ENCODE measurements at regions of chr2 and their contacts with region 1.

Region 1: GRCh38 chr2:234135720-234136221 is 85.3 kb downstream of the SPP2 start:
- DNase-seq: peak; percentile 70
- H3K4me3 Mint-ChIP-seq: no peak overlapping the region
- H3K27ac Mint-ChIP-seq: no peak overlapping the region
- H3K4me1 Mint-ChIP-seq: peaks cover 22% of the 10 kb centered on the region
- H3K27me3 Mint-ChIP-seq: no peaks in the 10 kb centered on the region

Region 2: DNA sequence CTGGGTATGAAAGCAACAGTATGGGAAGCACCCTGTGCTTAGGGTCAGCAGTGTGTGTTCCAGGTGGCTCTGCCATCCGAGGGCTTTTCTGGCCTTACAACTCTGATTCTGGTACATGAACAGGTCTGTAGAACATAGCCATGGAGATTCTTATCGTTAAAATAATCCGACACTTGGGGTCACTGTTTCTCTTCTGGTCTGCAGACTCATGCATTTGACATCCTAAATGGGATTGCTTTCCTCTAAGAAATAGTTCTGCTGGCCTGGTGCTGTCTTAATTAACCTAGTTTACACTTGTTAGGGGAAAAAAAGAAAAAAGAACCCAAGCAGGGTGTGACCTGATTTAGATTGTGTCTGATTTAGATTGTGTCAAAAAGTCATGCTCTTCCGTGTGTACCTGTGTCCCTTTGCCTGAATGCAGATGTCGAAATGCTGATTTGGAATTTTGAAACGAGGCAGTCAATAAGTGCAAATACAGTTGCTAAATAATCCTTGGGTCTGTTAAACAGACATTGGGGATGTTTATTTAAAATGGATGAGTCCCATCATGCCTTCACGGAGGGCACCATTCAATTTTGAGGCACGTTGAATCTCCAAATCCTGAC is 159.0 kb before region 1 on chr2:
- CTCF ChIA-PET with region 1: interaction called, 3 read pairs
- POLR2A ChIA-PET with region 1: no interaction called
- intact Hi-C with region 1: loop called (anchors 2 kb)
- DNase-seq: no peak
- H3K4me3 Mint-ChIP-seq: no peak overlapping the region
- H3K27ac Mint-ChIP-seq: no peak overlapping the region
- H3K4me1 Mint-ChIP-seq: peaks cover 37% of the 10 kb centered on the region
- H3K27me3 Mint-ChIP-seq: no peaks in the 10 kb centered on the region

Region 3: DNA sequence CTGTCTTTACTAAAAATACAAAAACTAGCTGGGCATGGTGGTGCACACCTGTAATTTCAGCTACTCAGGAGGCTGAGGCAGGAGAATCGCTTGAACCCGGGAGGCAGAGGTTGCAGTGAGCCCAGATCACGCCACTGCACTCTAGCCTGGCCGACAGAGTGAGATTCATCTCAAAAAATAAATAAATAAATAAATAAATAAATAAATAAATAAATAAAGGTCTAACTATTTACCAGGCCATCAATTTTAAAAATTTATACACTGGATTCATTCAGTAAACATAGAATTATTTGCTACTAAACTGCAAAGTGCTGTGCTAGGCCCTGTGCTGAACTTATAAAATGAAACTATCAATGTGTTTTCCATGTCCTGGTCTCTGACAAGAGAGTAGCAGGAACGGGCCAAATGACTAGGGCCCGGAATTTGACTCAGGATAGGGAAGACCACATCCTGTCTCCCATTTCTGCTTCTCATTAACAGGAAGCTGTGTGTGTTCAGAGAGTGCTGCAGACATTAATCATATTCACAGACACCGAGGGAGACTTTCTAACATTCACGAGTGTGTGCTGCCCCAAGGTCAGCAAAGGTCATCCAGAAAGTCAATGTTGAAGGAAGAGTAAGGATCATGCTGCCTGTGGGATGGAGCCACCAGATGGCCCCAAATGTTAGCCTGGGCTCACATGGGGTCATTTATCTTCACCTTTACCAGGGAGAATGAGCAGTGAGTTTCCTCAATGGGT is 10.5 kb after region 1 on chr2:
- CTCF ChIA-PET with region 1: interaction called, 10 read pairs
- POLR2A ChIA-PET with region 1: no interaction called
- intact Hi-C with region 1: no loop called
- DNase-seq: peak; percentile 38
- H3K4me3 Mint-ChIP-seq: peak overlapping the region; percentile 45
- H3K27ac Mint-ChIP-seq: peak overlapping the region; percentile 38
- H3K4me1 Mint-ChIP-seq: peaks cover 40% of the 10 kb centered on the region
- H3K27me3 Mint-ChIP-seq: no peaks in the 10 kb centered on the region

Measured in activated CD4-positive, alpha-beta memory T cell treated with anti-CD3 and anti-CD28 coated beads for 36 hours (primary cell).